GM13976 (cell line): ENCODE measurements at regions of chrX and their contacts with region 1.

Region 1: DNA sequence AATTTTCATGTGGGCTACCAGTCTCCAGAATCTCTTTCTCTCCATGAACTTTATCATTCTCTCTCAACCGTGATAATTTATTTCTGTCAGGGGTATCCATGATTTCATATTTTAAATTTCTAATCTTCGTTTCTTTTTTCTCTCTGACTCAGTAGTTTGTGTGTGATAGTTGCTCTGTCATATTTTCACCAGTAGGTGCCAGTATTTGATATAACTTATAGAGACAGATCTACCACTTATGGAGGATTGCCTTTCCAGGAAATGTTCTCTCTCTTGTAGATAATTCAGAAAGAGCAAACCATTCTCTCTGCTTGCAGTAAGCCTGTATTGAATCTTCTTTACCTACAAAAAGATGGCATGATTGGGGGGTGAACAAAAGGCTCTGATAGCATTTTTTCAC is 79.3 kb upstream of the DYNLT3 start:
- DNase-seq: peak; percentile 9
- CTCF ChIP-seq: peak; percentile 16

Region 2: GRCh38 chrX:38095971-38096529 is 169.3 kb after region 1 on chrX:
- in situ Hi-C with region 1: no loop called
- DNase-seq: no peak
- CTCF ChIP-seq: no peak

Region 3: GRCh38 chrX:38175140-38175539 is 248.4 kb after region 1 on chrX:
- in situ Hi-C with region 1: loop called (anchors 10 kb)
- DNase-seq: peak; percentile 19
- CTCF ChIP-seq: peak; percentile 42

Region 4: DNA sequence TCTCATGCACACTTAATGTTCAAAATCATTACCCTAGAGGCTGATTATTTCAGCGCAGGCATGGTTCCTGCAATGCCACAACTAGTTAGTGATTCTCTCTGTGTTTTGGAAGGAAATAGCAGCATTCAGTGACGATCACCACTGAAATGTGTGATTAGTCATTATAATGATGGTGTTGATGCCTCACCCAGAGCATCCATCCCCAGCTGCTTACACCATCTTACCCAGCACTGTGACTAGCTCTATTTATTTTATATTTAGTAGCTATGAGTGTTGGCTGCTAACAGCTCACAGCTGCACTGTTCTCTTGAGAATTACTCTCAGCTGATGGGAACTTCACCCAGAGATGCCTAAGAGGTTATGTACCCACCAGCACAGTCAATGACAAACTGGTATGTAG is 574.2 kb after region 1 on chrX:
- in situ Hi-C with region 1: no loop called
- DNase-seq: no peak
- CTCF ChIP-seq: no peak